Activated CD4-positive, alpha-beta memory T cell treated with anti-CD3 and anti-CD28 coated beads, Interleukin-2, amount 10 ng/mL, durations not matched to agents 7 days and 5 days (primary cell): ENCODE measurements at regions of chr6 and their contacts with region 1.

Region 1: GRCh38 chr6:26537846-26538571 is at the start of gene HMGN4:
- DNase-seq: peak; percentile 82
- H3K4me3 Mint-ChIP-seq: peak within 1 kb of the TSS; percentile 94
- H3K27ac Mint-ChIP-seq: peak within 1 kb of the TSS; percentile 98
- H3K4me1 Mint-ChIP-seq: peaks cover 63% of the 10 kb centered on the region
- H3K27me3 Mint-ChIP-seq: no peaks in the 10 kb centered on the region
- total RNA-seq, gene HMGN4: 108 to 109 TPM

Region 2: GRCh38 chr6:26249957-26250697 is 287.9 kb before region 1 on chr6:
- CTCF ChIA-PET with region 1: no interaction called
- POLR2A ChIA-PET with region 1: interaction called, 10 read pairs
- DNase-seq: peak; percentile 84
- H3K4me3 Mint-ChIP-seq: peak overlapping the region; percentile 90
- H3K27ac Mint-ChIP-seq: peak overlapping the region; percentile 93
- H3K4me1 Mint-ChIP-seq: peaks cover 42% of the 10 kb centered on the region
- H3K27me3 Mint-ChIP-seq: no peaks in the 10 kb centered on the region

Region 3: GRCh38 chr6:26342106-26343004 is 195.7 kb before region 1 on chr6:
- CTCF ChIA-PET with region 1: interaction called, 18 read pairs
- POLR2A ChIA-PET with region 1: interaction called, 7 read pairs
- DNase-seq: peak; percentile 39
- H3K4me3 Mint-ChIP-seq: peak overlapping the region; percentile 80
- H3K27ac Mint-ChIP-seq: peak overlapping the region; percentile 56
- H3K4me1 Mint-ChIP-seq: peaks cover 33% of the 10 kb centered on the region
- H3K27me3 Mint-ChIP-seq: peaks cover 15% of the 10 kb centered on the region

Region 4: DNA sequence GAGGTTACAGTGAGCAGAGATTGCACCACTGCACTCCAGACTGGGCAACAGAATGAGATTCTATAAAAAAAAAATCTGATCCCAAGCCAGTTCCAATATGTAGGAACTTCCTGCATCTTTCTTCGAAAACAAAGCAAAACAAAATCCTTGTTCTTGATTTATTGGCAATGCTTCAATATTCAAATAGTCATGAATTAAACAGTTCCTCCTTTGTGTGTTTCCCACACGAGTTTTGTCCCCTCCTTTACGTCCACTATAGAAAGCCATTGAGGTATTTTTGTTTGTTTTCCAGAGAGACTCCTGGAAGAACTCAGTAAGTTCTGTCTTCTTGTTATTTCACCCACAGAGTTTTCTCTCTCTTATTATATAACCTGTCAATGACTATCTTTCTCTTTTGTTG is 30.4 kb before region 1 on chr6:
- CTCF ChIA-PET with region 1: no interaction called
- POLR2A ChIA-PET with region 1: no interaction called
- DNase-seq: no peak
- H3K4me3 Mint-ChIP-seq: no peak overlapping the region
- H3K27ac Mint-ChIP-seq: no peak overlapping the region
- H3K4me1 Mint-ChIP-seq: no peaks in the 10 kb centered on the region
- H3K27me3 Mint-ChIP-seq: peaks cover 24% of the 10 kb centered on the region

Region 5: DNA sequence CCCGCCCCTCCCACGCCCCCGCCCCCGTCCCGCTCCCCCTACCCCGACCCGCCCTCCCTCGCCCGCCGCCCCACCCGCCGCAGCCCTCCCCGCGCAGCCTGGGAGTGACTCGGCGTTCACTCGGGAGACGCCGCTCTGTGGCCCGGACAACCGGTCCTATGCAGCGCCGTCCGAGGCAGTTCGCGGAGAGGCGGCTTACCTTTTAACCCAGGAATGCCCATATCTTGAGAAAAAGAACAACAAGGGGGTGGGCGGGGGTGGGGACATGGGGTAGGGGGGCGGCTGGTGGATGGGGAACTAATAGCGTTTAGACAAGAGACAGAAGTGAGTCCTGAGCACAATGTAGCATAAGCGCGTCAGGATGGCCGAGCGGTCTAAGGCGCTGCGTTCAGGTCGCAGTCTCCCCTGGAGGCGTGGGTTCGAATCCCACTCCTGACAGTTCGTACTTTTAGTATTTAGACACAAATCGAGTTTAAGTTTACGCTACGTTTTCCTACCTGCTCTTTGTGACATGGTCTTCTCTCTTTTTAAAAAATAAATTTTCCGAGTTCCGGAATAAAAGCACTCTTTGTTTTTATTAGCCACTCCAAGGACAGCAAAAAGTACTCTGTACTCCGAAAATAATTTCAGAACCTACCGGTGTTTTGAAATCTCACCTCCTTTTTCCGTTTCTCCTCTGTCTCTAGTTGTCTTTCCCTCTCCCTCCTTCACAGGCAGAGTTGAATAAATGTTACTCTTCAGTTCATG is 17.0 kb before region 1 on chr6:
- CTCF ChIA-PET with region 1: interaction called, 4 read pairs
- POLR2A ChIA-PET with region 1: interaction called, 35 read pairs
- DNase-seq: peak; percentile 86
- H3K4me3 Mint-ChIP-seq: peak overlapping the region; percentile 75
- H3K27ac Mint-ChIP-seq: peak overlapping the region; percentile 88
- H3K4me1 Mint-ChIP-seq: peaks cover 32% of the 10 kb centered on the region
- H3K27me3 Mint-ChIP-seq: no peaks in the 10 kb centered on the region

Region 6: DNA sequence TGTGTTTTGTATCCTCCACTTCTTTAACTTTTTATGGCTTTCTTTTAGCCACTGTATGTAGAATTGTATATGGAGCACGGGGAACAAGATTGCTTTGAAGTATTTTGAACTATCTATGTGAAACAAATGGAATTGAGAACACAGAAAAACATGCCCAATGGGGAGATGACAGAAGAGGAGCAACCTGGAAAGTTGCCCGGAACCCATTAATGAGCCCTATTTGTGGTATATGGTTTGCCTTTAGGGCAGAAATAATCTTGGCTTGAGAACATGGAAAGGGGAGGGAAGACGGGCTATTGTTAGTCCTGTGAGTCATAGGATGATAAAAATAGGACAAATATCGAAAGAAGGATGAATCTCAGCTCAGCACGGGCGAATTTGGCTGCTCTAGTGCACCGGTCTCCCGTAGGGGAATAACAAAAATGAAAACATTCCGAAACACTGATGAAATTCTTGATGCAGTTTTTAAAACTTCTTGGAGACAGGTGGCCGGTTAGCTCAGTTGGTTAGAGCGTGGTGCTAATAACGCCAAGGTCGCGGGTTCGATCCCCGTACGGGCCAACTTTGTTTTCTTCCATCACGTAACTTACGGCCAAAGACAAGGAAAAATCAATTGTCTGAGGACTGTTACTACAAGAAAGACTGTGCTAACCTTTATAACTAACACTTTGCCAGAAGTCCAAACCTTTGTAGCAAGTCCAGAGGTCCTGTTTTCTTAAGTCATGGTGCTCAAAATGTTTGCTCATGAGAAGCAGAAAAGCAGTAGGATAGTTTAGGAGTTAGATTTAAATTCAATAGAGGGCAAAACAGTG is 15.8 kb after region 1 on chr6:
- CTCF ChIA-PET with region 1: interaction called, 19 read pairs
- POLR2A ChIA-PET with region 1: interaction called, 39 read pairs
- DNase-seq: peak; percentile 85
- H3K4me3 Mint-ChIP-seq: no peak overlapping the region
- H3K27ac Mint-ChIP-seq: no peak overlapping the region
- H3K4me1 Mint-ChIP-seq: peaks cover 26% of the 10 kb centered on the region
- H3K27me3 Mint-ChIP-seq: no peaks in the 10 kb centered on the region

Region 7: DNA sequence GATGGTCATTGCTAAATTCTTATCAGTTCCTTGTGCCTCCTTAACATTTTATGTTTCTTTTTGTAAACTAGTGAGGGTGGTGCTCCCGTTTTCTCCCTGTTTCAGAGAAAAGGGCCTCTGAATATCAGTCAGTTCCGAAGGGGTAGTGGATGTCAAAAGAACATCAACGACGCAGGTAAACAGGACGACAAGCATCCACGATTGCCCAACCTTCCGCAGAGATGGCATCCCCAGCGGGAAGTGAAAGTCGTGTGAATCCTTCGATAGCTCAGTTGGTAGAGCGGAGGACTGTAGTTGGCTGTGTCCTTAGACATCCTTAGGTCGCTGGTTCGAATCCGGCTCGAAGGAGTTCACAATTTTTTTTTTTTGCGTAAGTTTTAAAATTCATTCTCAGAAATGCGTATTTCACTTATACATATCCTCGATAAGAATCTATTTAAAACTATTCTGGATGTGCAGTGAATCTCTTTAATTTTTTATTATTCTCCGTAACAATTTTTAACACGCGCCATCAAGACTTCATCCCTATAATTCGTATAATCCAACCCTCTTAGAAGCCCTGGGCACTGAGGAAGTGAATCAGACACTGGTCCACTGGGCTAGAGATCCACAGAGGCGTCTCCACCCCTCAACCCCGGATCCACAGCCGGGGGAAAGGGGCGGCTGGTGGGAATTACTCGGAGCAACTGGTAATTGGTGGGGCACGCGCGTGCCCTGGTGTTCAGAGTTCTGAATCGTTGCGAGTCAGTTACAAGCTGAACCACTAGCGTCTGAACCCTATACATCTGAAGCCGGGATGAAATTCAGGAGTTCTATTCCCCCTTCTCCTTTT is 30.8 kb after region 1 on chr6:
- CTCF ChIA-PET with region 1: interaction called, 10 read pairs
- POLR2A ChIA-PET with region 1: interaction called, 11 read pairs
- DNase-seq: peak; percentile 98
- H3K4me3 Mint-ChIP-seq: peak overlapping the region; percentile 92
- H3K27ac Mint-ChIP-seq: peak overlapping the region; percentile 87
- H3K4me1 Mint-ChIP-seq: peaks cover 29% of the 10 kb centered on the region
- H3K27me3 Mint-ChIP-seq: peaks cover 11% of the 10 kb centered on the region

Region 8: GRCh38 chr6:26659042-26659999 is 121.3 kb after region 1 on chr6 and contains the start of gene ZNF322:
- CTCF ChIA-PET with region 1: no interaction called
- POLR2A ChIA-PET with region 1: no interaction called
- DNase-seq: peak; percentile 90
- H3K4me3 Mint-ChIP-seq: peak within 1 kb of the TSS; percentile 75
- H3K27ac Mint-ChIP-seq: peak within 1 kb of the TSS; percentile 23
- H3K4me1 Mint-ChIP-seq: peaks cover 15% of the 10 kb centered on the region
- H3K27me3 Mint-ChIP-seq: peaks cover 21% of the 10 kb centered on the region
- total RNA-seq, gene ZNF322: 10.3 to 12.3 TPM